Activated CD4-positive, alpha-beta T cell treated with anti-CD3 and anti-CD28 coated beads, Interleukin-2, amount 10 ng/mL, durations not matched to agents 24 days and 14 days (primary cell): ENCODE measurements at regions of chr2 and their contacts with region 1.

Region 1: DNA sequence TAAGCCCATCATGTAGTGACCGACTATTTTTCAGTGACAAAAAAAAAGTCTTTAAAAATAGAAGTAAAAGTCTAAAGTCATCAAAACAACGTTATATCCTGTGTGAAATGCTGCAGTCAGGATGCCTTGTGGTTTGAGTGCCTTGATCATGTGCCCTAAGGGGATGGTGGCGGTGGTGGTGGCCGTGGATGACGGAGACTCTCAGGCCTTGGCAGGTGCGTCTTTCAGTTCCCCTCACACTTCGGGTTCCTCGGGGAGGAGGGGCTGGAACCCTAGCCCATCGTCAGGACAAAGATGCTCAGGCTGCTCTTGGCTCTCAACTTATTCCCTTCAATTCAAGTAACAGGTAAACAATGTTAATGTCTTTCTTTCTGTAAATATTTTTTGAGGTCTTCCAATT is at the start of gene CD28:
- DNase-seq: peak; percentile 97
- H3K4me3 Mint-ChIP-seq: peak within 1 kb of the TSS; percentile 92
- H3K27ac Mint-ChIP-seq: peak within 1 kb of the TSS; percentile 98
- H3K4me1 Mint-ChIP-seq: peaks cover 46% of the 10 kb centered on the region
- H3K27me3 Mint-ChIP-seq: no peaks in the 10 kb centered on the region
- total RNA-seq, gene CD28: 130 and 132 TPM in 2 replicates

Region 2: GRCh38 chr2:203484266-203485112 is 221.9 kb before region 1 on chr2:
- intact Hi-C with region 1: loop called (anchors 2 kb)
- DNase-seq: peak; percentile 84
- H3K4me3 Mint-ChIP-seq: no peak overlapping the region
- H3K27ac Mint-ChIP-seq: peak overlapping the region; percentile 9
- H3K4me1 Mint-ChIP-seq: peaks cover 7% of the 10 kb centered on the region
- H3K27me3 Mint-ChIP-seq: no peaks in the 10 kb centered on the region

Region 3: GRCh38 chr2:203673933-203674332 is 32.5 kb before region 1 on chr2:
- intact Hi-C with region 1: loop called (anchors 1 kb)
- DNase-seq: peak; percentile 83
- H3K4me3 Mint-ChIP-seq: peak overlapping the region; percentile 63
- H3K27ac Mint-ChIP-seq: peak overlapping the region; percentile 89
- H3K4me1 Mint-ChIP-seq: peaks cover 27% of the 10 kb centered on the region
- H3K27me3 Mint-ChIP-seq: no peaks in the 10 kb centered on the region

Region 4: GRCh38 chr2:203730076-203730729 is 23.8 kb after region 1 on chr2:
- intact Hi-C with region 1: loop called (anchors 1 kb)
- DNase-seq: peak; percentile 71
- H3K4me3 Mint-ChIP-seq: peak overlapping the region; percentile 71
- H3K27ac Mint-ChIP-seq: peak overlapping the region; percentile 96
- H3K4me1 Mint-ChIP-seq: peaks cover 79% of the 10 kb centered on the region
- H3K27me3 Mint-ChIP-seq: no peaks in the 10 kb centered on the region

Region 5: DNA sequence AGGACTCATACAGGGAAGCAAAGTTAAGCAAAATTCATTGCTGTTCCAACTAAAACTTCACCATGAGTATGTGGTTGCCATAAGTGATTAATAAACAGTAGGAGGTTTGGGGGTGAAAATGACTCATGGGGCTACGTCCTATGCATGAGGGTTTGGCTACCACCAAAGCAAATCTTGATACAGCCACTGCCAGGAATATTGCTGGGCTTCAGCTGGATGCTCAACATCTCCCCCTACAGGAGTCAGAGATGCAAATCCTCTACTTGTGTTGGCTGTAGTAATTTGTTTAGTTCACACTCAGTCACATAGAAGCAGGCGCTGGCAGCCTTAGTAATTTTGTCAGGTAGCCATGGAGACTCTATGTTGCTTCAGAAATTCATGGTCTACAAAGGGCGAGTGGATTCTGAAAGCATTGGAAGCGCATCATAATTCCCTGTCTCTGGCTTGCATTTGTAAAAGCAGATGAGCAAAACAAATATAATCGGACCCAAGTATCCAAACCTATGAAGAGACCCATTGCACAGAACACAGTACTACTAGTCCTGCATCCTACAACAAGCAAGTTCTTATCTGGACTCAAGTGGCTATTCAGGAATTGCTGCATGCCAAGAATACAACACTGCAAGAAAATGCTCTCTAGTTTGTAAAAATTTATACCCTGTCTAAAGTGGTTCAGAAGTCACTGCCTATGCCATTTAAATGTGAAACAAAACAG is 76.0 kb after region 1 on chr2:
- intact Hi-C with region 1: loop called (anchors 1 kb)
- DNase-seq: peak; percentile 89
- H3K4me3 Mint-ChIP-seq: no peak overlapping the region
- H3K27ac Mint-ChIP-seq: peak overlapping the region; percentile 81
- H3K4me1 Mint-ChIP-seq: peaks cover 50% of the 10 kb centered on the region
- H3K27me3 Mint-ChIP-seq: no peaks in the 10 kb centered on the region

Region 6: DNA sequence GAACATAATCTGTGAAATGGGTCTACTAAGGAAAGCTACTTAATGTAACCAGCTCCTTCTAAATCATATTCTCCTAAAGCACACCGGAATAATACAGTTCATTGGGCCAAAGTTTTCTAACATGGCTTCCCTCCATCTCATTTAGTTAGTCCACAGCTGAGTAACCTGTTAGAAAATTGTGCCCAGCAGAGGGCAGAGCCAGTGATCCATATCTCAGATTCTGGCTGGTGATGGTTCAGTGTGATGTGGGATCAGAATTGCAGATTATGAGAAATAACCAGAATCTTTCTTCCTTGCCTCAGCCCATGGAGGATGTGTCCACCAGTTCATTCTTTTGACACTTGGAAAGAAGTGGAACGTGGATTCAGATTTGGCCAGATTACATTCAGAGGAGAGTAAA is 151.8 kb after region 1 on chr2:
- intact Hi-C with region 1: no loop called
- DNase-seq: peak; percentile 72
- H3K4me3 Mint-ChIP-seq: no peak overlapping the region
- H3K27ac Mint-ChIP-seq: peak overlapping the region; percentile 55
- H3K4me1 Mint-ChIP-seq: peaks cover 64% of the 10 kb centered on the region
- H3K27me3 Mint-ChIP-seq: no peaks in the 10 kb centered on the region

Region 7: GRCh38 chr2:203940039-203940438 is 233.6 kb after region 1 on chr2:
- intact Hi-C with region 1: loop called (anchors 2 kb)
- DNase-seq: no peak
- H3K4me3 Mint-ChIP-seq: peak overlapping the region; percentile 93
- H3K27ac Mint-ChIP-seq: peak overlapping the region; percentile 92
- H3K4me1 Mint-ChIP-seq: peaks cover 46% of the 10 kb centered on the region
- H3K27me3 Mint-ChIP-seq: no peaks in the 10 kb centered on the region